T-cell (primary cell): ENCODE measurements at regions of chr2 and their contacts with region 1.

Region 1: GRCh38 chr2:30711646-30712085 is 95.6 kb downstream of the CAPN13 start:
- DNase-seq: peak; percentile 57 to 93 (median 81)
- ATAC-seq: peak; percentile 83 to 92 (median 87)
- H3K4me3 ChIP-seq: no peak overlapping the region
- H3K4me3 Mint-ChIP-seq: no peak overlapping the region
- H3K27ac ChIP-seq: no peak overlapping the region
- H3K27ac Mint-ChIP-seq: no peak overlapping the region
- H3K4me1 ChIP-seq: peaks cover 0 to 12% of the 10 kb centered on the region in 2 experiments
- H3K4me1 Mint-ChIP-seq: peaks cover 0 to 5% (median 5%) of the 10 kb centered on the region in 3 donors
- H3K27me3 ChIP-seq: peaks cover 0 to 16% of the 10 kb centered on the region in 2 experiments
- H3K27me3 Mint-ChIP-seq: peaks cover 0 to 2% of the 10 kb centered on the region in 2 donors

Region 2: GRCh38 chr2:29844713-29845326 is 866.8 kb before region 1 on chr2:
- CTCF ChIA-PET with region 1: interaction called in 1 of 2 experiments, 11 read pairs
- POLR2A ChIA-PET with region 1: no interaction called
- DNase-seq: no peak
- ATAC-seq: no peak
- H3K4me3 ChIP-seq: no peak overlapping the region
- H3K4me3 Mint-ChIP-seq: no peak overlapping the region
- H3K27ac ChIP-seq: no peak overlapping the region
- H3K27ac Mint-ChIP-seq: no peak overlapping the region
- H3K4me1 ChIP-seq: no peaks in the 10 kb centered on the region
- H3K4me1 Mint-ChIP-seq: no peaks in the 10 kb centered on the region
- H3K27me3 ChIP-seq: peaks cover 0 to 11% of the 10 kb centered on the region in 2 experiments
- H3K27me3 Mint-ChIP-seq: peaks cover 9 to 19% of the 10 kb centered on the region in 2 donors

Region 3: GRCh38 chr2:30165050-30165520 is 546.6 kb before region 1 on chr2:
- CTCF ChIA-PET with region 1: interaction called, 80 to 339 read pairs
- POLR2A ChIA-PET with region 1: interaction called, 6 to 26 read pairs
- DNase-seq: peak in 34 of 35 experiments; percentile 6 to 89 (median 66)
- ATAC-seq: peak; percentile 43 to 96 (median 92)
- H3K4me3 ChIP-seq: no peak overlapping the region
- H3K4me3 Mint-ChIP-seq: peak overlapping the region in 1 of 3 donors; percentile 34
- H3K27ac ChIP-seq: no peak overlapping the region
- H3K27ac Mint-ChIP-seq: no peak overlapping the region
- H3K4me1 ChIP-seq: peaks cover 0 to 3% of the 10 kb centered on the region in 2 experiments
- H3K4me1 Mint-ChIP-seq: peaks cover 8 to 33% (median 11%) of the 10 kb centered on the region in 3 donors
- H3K27me3 ChIP-seq: no peaks in the 10 kb centered on the region
- H3K27me3 Mint-ChIP-seq: no peaks in the 10 kb centered on the region

Region 4: DNA sequence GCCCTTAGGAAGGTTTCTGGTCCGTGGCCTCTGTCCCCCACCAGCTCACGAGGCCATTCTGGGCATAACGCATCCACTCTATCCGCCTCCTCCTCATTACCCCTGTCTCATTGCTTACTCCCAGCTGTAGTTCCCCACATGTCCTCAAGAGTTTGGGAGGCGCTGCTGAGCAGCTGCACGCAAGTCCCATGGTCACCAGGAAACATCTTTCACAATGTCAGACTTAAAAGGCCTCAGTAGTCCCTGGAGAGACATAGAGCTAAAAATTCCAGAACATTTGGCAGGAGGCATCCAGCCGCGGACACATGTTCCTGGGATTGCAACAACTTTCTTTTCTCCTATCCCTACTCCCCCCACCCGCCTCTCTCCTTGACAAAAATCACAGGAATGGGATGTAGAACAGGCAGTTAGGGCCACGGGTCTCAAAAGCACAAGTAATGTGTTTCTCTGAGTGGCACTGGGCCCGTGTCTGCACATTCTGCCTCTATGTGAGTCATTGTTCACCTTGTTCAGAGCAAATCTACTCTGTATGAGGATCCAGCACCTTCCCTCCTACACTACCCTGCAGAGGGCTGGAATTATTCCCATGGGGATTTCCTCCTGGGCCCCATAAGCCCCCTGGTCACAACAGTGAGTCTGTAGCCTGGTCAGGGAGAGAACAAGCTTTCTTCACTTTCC is 472.2 kb before region 1 on chr2:
- CTCF ChIA-PET with region 1: interaction called, 9 to 11 read pairs
- POLR2A ChIA-PET with region 1: interaction called in 1 of 2 experiments, 7 read pairs
- DNase-seq: peak; percentile 51 to 92 (median 71)
- ATAC-seq: peak; percentile 43 to 68 (median 55)
- H3K4me3 ChIP-seq: peak overlapping the region in 1 of 2 donors; percentile 2
- H3K4me3 Mint-ChIP-seq: peak overlapping the region; percentile 64 to 98 (median 79)
- H3K27ac ChIP-seq: peak overlapping the region; percentile 40
- H3K27ac Mint-ChIP-seq: peak overlapping the region; percentile 82 to 96
- H3K4me1 ChIP-seq: peaks cover 64 to 90% of the 10 kb centered on the region in 2 experiments
- H3K4me1 Mint-ChIP-seq: peaks cover 89 to 95% (median 93%) of the 10 kb centered on the region in 3 donors
- H3K27me3 ChIP-seq: no peaks in the 10 kb centered on the region
- H3K27me3 Mint-ChIP-seq: no peaks in the 10 kb centered on the region

Region 5: GRCh38 chr2:30584116-30584515 is 127.5 kb before region 1 on chr2:
- CTCF ChIA-PET with region 1: no interaction called
- POLR2A ChIA-PET with region 1: no interaction called
- DNase-seq: no peak
- ATAC-seq: no peak
- H3K4me3 ChIP-seq: no peak overlapping the region
- H3K4me3 Mint-ChIP-seq: no peak overlapping the region
- H3K27ac ChIP-seq: no peak overlapping the region
- H3K27ac Mint-ChIP-seq: peak overlapping the region in 1 of 2 donors; percentile 66
- H3K4me1 ChIP-seq: no peaks in the 10 kb centered on the region
- H3K4me1 Mint-ChIP-seq: peaks cover 14 to 47% (median 24%) of the 10 kb centered on the region in 3 donors
- H3K27me3 ChIP-seq: no peaks in the 10 kb centered on the region
- H3K27me3 Mint-ChIP-seq: no peaks in the 10 kb centered on the region

Region 6: GRCh38 chr2:30862054-30862651 is 150.5 kb after region 1 on chr2:
- CTCF ChIA-PET with region 1: interaction called, 11 to 14 read pairs
- POLR2A ChIA-PET with region 1: interaction called in 1 of 2 experiments, 3 read pairs
- DNase-seq: peak in 29 of 35 experiments; percentile 7 to 66 (median 29)
- ATAC-seq: peak in 1 of 4 experiments; percentile 43
- H3K4me3 ChIP-seq: no peak overlapping the region
- H3K4me3 Mint-ChIP-seq: no peak overlapping the region
- H3K27ac ChIP-seq: no peak overlapping the region
- H3K27ac Mint-ChIP-seq: no peak overlapping the region
- H3K4me1 ChIP-seq: peaks cover 0 to 5% of the 10 kb centered on the region in 2 experiments
- H3K4me1 Mint-ChIP-seq: peaks cover 10 to 18% (median 11%) of the 10 kb centered on the region in 3 donors
- H3K27me3 ChIP-seq: no peaks in the 10 kb centered on the region
- H3K27me3 Mint-ChIP-seq: peaks cover 13% of the 10 kb centered on the region in 2 donors

Region 7: GRCh38 chr2:31333527-31334183 is 622.0 kb after region 1 on chr2:
- CTCF ChIA-PET with region 1: interaction called, 27 to 34 read pairs
- POLR2A ChIA-PET with region 1: no interaction called
- DNase-seq: peak; percentile 22 to 80 (median 65)
- ATAC-seq: peak; percentile 66 to 85 (median 75)
- H3K4me3 ChIP-seq: no peak overlapping the region
- H3K4me3 Mint-ChIP-seq: no peak overlapping the region
- H3K27ac ChIP-seq: no peak overlapping the region
- H3K27ac Mint-ChIP-seq: no peak overlapping the region
- H3K4me1 ChIP-seq: no peaks in the 10 kb centered on the region
- H3K4me1 Mint-ChIP-seq: no peaks in the 10 kb centered on the region
- H3K27me3 ChIP-seq: peaks cover 0 to 4% of the 10 kb centered on the region in 2 experiments
- H3K27me3 Mint-ChIP-seq: peaks cover 3 to 5% of the 10 kb centered on the region in 2 donors